Activated B cell treated with CpG ODN at 0.5 μM for 24 hours (primary cell): ENCODE measurements at regions of chr12 and their contacts with region 1.

Region 1: GRCh38 chr12:54279866-54280467 is at the start of gene CBX5:
- DNase-seq: peak; percentile 97
- ATAC-seq: peak; percentile 40
- H3K4me3 Mint-ChIP-seq: no peak within 1 kb of the TSS
- H3K27ac Mint-ChIP-seq: no peak within 1 kb of the TSS
- H3K4me1 Mint-ChIP-seq: peaks cover 64% of the 10 kb centered on the region
- H3K27me3 Mint-ChIP-seq: no peaks in the 10 kb centered on the region
- CTCF ChIP-seq: no peak
- total RNA-seq, gene CBX5: 77.3 TPM in 2 replicates

Region 2: DNA sequence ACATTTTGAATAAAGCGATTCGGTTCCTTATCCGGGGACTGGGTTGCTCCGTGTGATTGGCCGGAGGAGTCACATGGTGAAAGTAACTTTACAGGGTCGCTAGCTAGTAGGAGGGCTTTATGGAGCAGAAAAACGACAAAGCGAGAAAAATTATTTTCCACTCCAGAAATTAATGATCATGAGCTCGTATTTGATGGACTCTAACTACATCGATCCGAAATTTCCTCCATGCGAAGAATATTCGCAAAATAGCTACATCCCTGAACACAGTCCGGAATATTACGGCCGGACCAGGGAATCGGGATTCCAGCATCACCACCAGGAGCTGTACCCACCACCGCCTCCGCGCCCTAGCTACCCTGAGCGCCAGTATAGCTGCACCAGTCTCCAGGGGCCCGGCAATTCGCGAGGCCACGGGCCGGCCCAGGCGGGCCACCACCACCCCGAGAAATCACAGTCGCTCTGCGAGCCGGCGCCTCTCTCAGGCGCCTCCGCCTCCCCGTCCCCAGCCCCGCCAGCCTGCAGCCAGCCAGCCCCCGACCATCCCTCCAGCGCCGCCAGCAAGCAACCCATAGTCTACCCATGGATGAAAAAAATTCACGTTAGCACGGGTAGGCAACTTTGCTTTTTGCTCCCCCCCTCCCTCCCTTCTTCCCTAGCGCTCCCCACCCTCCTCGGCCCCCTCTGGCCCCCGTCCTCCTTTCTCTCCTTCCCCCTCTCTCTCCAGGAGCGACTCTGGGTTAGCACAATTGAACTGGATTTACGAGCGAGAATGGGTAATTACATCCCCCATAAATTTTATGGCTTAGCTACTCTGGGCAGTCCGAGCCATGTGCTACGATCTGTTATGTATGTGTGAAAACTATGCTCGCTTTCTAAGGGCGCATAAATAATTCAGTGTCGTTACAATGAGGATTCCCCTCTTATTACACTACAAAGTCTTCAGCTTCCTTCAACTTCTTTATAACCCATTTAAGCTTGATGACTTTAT is 225.9 kb before region 1 on chr12 and contains the start of gene HOXC4:
- CTCF ChIA-PET with region 1: no interaction called
- POLR2A ChIA-PET with region 1: interaction called, 9 read pairs
- intact Hi-C with region 1: loop called (anchors 1 kb)
- DNase-seq: no peak
- ATAC-seq: peak; percentile 75
- H3K4me3 Mint-ChIP-seq: peak within 1 kb of the TSS; percentile 88
- H3K27ac Mint-ChIP-seq: peak within 1 kb of the TSS; percentile 89
- H3K4me1 Mint-ChIP-seq: peaks cover 50% of the 10 kb centered on the region
- H3K27me3 Mint-ChIP-seq: peaks cover 25% of the 10 kb centered on the region
- CTCF ChIP-seq: no peak
- total RNA-seq, gene HOXC4: 4.3 and 4.8 TPM in 2 replicates

Region 3: DNA sequence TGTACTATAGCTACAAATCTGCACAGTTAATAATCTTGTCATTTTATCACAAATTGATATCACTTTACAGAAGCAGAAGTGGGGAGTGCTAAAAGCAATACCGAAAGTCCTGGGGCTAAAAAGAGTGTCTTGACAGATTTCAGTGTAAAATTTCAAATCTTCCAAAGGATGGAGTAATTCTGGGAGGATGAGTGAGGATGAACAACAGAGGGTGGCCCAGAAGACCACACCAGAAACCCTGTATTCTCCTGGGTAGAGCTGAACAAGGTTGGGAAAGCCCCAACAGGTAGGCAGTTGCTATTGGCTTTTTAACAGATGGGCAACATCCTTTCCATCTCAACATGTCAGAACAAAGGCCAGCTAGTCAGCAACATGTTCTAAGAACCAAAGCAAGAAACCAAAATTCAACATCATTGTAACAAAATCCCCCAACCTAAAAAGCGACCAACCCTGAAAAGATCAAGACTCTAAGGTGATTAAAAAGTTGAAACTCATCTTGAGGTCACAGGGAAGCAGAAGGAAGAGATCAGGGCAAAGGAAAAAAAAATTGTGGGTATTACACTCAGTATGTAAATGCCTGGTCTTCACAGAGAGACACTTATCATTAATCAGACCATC is 38.9 kb before region 1 on chr12:
- CTCF ChIA-PET with region 1: no interaction called
- POLR2A ChIA-PET with region 1: interaction called, 10 read pairs
- intact Hi-C with region 1: no loop called
- DNase-seq: no peak
- ATAC-seq: peak; percentile 28
- H3K4me3 Mint-ChIP-seq: no peak overlapping the region
- H3K27ac Mint-ChIP-seq: peak overlapping the region; percentile 71
- H3K4me1 Mint-ChIP-seq: peaks cover 9% of the 10 kb centered on the region
- H3K27me3 Mint-ChIP-seq: no peaks in the 10 kb centered on the region
- CTCF ChIP-seq: no peak

Region 4: DNA sequence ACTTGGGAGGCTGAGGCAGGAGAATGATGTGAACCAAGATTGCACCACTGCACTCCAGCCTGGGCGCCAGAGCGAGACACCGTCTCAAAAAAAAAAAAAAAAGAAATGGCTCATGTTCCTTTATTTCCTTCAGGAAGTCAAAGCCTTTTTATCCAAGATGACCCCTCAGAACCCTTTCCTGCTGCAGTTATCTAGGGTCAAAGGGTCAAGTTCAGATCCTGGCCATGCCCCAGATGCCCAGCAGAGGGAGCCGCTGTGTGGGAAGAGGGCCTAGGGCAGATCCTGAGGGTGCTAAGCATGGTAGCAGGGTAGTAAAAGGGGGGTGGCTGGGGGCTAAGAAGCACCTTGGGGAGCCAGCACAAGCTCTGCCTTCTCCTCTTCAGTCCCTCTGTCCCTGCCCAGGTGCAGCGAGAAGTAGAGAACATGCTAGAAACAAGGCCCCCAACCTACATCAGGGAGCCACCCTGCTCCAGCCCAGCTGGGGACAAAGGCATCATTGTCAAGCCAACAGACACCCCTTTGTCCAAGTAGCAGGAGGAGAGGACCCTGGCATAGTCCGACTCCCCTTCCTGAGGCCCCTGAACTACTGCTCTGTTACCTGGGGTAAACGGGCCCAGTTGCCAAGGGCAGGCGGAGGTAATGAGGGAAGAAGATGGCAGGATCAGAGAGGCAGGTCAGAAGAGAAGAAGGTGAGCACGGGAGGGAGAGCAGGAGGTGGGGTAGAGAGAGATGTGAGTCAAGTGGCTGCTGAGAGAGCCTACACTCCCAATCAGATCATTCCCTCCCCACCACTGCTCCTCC is 14.4 kb after region 1 on chr12:
- CTCF ChIA-PET with region 1: interaction called, 5 read pairs
- POLR2A ChIA-PET with region 1: interaction called, 54 read pairs
- intact Hi-C with region 1: no loop called
- DNase-seq: no peak
- ATAC-seq: peak; percentile 79
- H3K4me3 Mint-ChIP-seq: no peak overlapping the region
- H3K27ac Mint-ChIP-seq: no peak overlapping the region
- H3K4me1 Mint-ChIP-seq: peaks cover 12% of the 10 kb centered on the region
- H3K27me3 Mint-ChIP-seq: peaks cover 12% of the 10 kb centered on the region
- CTCF ChIP-seq: no peak

Region 5: DNA sequence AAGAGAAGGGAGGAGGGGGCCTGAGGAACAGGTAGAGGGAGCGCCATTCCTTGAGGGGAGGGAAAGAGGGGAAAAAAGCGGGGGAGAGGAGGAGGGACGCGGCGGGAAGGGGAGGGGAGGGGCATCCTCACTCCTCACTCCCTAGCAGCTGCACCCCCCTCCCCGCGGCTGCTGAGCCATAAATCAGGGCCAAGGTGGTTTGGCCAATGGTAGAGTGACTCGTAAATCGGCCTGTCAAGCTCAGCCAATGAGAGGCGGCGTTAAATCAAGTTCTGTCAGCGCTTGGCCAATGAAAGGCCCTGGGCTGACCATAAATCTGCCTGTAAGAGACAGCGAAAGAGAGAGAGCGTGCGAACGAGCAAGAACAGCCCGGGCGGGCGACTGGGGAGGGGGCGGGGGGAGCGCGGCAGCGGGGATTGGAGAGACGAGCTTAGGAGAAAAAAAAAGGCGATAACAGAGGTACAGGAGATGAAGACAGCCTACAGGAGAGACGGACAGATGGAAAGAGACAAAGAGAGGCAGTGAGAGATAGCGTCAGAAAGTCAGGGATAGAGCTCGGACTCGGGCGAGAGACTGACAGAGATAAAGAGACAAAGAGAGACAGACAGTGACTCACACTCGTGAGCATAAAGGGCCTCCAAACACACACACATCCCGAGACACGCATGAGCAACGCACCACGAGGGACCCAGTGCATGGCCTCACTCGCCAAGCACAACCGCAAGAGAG is 79.2 kb after region 1 on chr12:
- CTCF ChIA-PET with region 1: interaction called, 7 read pairs
- POLR2A ChIA-PET with region 1: interaction called, 37 read pairs
- intact Hi-C with region 1: loop called (anchors 1 kb)
- DNase-seq: peak; percentile 71
- ATAC-seq: peak; percentile 97
- H3K4me3 Mint-ChIP-seq: no peak overlapping the region
- H3K27ac Mint-ChIP-seq: no peak overlapping the region
- H3K4me1 Mint-ChIP-seq: peaks cover 11% of the 10 kb centered on the region
- H3K27me3 Mint-ChIP-seq: no peaks in the 10 kb centered on the region
- CTCF ChIP-seq: no peak